ENCODE measurements at regions of chr13 and their contacts with region 1.

Region 1: GRCh38 chr13:113816946-113817859 is 46.7 kb downstream of the GAS6 start:
- DNase-seq: peak; percentile 86 to 96 (median 92)
- ATAC-seq: peak; percentile 71 to 80 (median 78)
- H3K4me3 ChIP-seq: no peak overlapping the region
- H3K27ac ChIP-seq: peak overlapping the region in 1 of 4 donors; percentile 5
- H3K4me1 ChIP-seq: peaks cover 0 to 5% (median 4%) of the 10 kb centered on the region in 3 donors
- H3K27me3 ChIP-seq: no peaks in the 10 kb centered on the region
- CTCF ChIP-seq: peak; percentile 65 to 85 (median 74)

Region 2: GRCh38 chr13:113458253-113459065 is 358.7 kb before region 1 on chr13:
- intact Hi-C with region 1: no loop called
- DNase-seq: peak in 2 of 6 donors; percentile 54 to 55
- ATAC-seq: no peak
- H3K4me3 ChIP-seq: no peak overlapping the region
- H3K27ac ChIP-seq: no peak overlapping the region
- H3K4me1 ChIP-seq: peaks cover 0 to 3% (median 0%) of the 10 kb centered on the region in 3 donors
- H3K27me3 ChIP-seq: no peaks in the 10 kb centered on the region
- CTCF ChIP-seq: peak in 1 of 4 donors; percentile 7

Region 3: GRCh38 chr13:113930671-113931637 is 113.8 kb after region 1 on chr13:
- intact Hi-C with region 1: loop called in 1 of 3 experiments (anchors 10 kb)
- DNase-seq: peak in 2 of 6 donors; percentile 5 to 43
- ATAC-seq: no peak
- H3K4me3 ChIP-seq: no peak overlapping the region
- H3K27ac ChIP-seq: no peak overlapping the region
- H3K4me1 ChIP-seq: no peaks in the 10 kb centered on the region
- H3K27me3 ChIP-seq: no peaks in the 10 kb centered on the region
- CTCF ChIP-seq: no peak

Region 4: DNA sequence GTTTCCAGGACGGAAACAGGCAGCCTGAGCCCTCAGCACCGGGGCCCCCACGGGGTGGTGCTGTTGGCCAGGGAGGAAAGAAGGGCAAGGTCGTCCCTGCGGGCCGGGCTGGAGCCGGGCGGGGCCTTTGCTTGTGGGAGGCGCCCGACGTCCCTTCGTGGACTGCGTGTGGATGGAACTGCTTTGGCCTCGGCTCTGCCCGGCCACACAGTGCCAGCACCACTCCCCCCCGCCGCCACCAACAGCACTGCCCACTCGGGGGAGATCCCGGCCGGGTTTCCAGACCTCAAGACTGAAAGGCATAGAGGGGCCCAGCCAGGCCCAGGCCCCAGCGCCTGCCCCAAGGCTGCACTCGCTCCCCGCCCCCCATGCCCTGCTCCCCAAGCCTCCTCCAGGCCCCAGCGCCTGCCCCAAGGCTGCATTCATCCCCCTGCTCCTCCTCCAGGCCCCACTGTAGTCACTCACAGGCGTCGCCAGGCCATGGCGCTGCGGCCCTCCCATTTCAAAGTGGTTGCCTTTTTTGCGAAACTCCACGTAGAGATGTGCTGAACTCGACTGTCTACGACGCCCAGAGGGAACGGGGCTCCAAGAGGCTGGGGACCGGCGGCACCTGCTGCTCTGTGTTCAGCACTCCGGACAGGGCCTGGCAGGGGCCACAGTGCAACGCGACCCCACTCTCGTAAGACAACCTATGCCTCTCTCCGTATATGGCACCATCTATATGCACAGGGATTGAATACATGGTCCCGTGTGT is 134.2 kb after region 1 on chr13:
- intact Hi-C with region 1: loop called in 2 of 3 experiments (anchors 5 to 10 kb)
- DNase-seq: peak; percentile 78 to 95 (median 88)
- ATAC-seq: peak; percentile 81 to 96 (median 94)
- H3K4me3 ChIP-seq: no peak overlapping the region
- H3K27ac ChIP-seq: no peak overlapping the region
- H3K4me1 ChIP-seq: no peaks in the 10 kb centered on the region
- H3K27me3 ChIP-seq: no peaks in the 10 kb centered on the region
- CTCF ChIP-seq: peak; percentile 61 to 81 (median 68)

Measured in pancreas (tissue), 10 donors.